Heart right ventricle (tissue), 16 donors: ENCODE measurements at regions of chr20 and their contacts with region 1.

Region 1: DNA sequence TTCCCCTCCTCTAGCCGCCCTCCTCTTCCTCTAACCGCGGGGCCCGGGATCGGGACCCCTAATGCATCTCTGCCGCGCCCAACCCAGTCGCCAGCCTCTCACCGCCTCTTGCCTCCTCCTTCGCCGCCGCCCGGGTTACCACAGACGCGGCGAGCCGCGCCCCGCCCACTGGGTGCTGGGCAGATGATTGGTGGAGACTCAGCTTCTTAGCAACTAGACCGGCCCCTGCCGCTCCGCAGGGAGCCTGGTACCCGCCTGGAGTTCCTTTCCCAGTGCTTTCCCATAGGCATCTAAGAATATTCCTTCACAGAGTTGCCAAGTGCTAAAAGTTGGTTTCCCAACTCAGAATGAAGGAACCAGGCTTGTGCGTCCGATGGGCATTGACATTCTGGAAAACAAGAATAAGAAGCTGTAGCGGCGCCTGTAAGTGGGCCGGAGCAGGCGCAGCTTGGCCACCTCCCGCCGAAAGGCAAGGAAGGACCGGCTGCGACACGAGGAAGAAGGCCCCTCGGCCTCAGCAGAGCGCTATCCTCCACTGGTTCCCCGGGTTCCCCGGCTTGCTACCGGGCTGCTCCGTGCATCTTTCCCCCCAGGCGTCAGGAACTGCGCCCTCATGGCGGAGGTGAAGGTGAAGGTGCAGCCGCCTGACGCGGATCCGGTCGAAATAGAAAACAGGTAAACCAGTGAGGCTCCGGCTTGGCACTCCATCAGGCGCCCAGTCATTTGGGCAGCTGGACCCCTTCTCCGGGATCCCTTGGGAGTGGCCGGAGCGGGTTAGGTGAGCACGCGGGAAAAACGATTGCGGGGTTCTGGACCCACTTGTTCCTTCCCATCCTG is at the starts of genes DZANK1 and POLR3F:
- DNase-seq: peak; percentile 95
- ATAC-seq: peak; percentile 100
- H3K4me3 ChIP-seq: peak within 1 kb of the TSS; percentile 64 to 100 (median 84)
- H3K27ac ChIP-seq: peak within 1 kb of the TSS; percentile 34 to 95 (median 86)
- H3K4me1 ChIP-seq: peaks cover 0 to 26% (median 20%) of the 10 kb centered on the region in 9 donors
- H3K27me3 ChIP-seq: no peaks in the 10 kb centered on the region
- CTCF ChIP-seq: no peak
- total RNA-seq, gene DZANK1: 0.35 to 1.7 (median 0.83) TPM
- total RNA-seq, gene POLR3F: 6.5 to 10.1 (median 7.8) TPM

Region 2: GRCh38 chr20:18287915-18288748 is 179.0 kb before region 1 on chr20 and contains the start of gene ZNF133:
- intact Hi-C with region 1: loop called in 1 of 10 experiments (anchors 5 kb)
- DNase-seq: peak; percentile 96 to 98
- ATAC-seq: peak; percentile 98 to 100 (median 99)
- H3K4me3 ChIP-seq: peak within 1 kb of the TSS; percentile 65 to 95 (median 83)
- H3K27ac ChIP-seq: peak within 1 kb of the TSS; percentile 91 to 100 (median 96)
- H3K4me1 ChIP-seq: peaks cover 0 to 19% (median 14%) of the 10 kb centered on the region in 9 donors
- H3K27me3 ChIP-seq: peaks cover 0 to 30% (median 16%) of the 10 kb centered on the region in 7 donors
- CTCF ChIP-seq: peak in 2 of 9 donors; percentile 12 to 22
- total RNA-seq, gene ZNF133: 4.9 to 7.2 (median 5.6) TPM

Region 3: DNA sequence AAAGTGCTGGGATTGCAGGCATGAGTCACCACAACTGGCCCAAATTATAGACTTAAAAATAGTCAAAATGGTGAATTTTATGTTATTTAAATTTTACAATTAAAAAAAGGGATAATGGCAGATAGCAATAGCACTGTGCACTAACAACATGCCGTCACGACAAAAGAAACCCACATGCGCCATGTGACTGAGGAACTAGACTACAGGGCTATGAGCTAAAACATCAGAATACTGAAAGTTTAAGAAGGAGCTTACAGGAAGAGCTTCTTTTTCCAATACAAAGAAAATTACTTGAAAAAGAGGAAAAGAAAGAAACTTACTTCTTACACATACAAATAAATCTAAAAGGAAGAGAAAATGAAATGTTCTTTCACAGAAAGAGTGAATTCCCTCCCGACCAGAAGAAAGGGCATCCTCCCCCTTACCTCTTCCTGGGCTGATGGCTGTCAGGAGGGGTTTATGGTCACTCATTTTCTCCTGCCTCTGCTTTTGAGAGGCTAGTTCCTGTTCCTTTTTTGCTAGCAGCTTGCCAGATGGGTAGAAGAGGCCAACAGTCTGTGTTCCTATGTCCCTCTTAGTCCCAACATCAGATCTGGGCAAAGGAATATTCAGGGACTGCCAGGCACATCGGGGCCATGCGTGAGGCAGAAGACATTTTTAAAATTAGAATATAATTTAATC is 54.8 kb before region 1 on chr20:
- intact Hi-C with region 1: loop called in 2 of 10 experiments (anchors 10 kb)
- DNase-seq: no peak
- ATAC-seq: peak in 1 of 8 donors; percentile 20
- H3K4me3 ChIP-seq: no peak overlapping the region
- H3K27ac ChIP-seq: peak overlapping the region in 1 of 10 donors; percentile 11
- H3K4me1 ChIP-seq: peaks cover 0 to 4% (median 0%) of the 10 kb centered on the region in 9 donors
- H3K27me3 ChIP-seq: no peaks in the 10 kb centered on the region
- CTCF ChIP-seq: no peak

Region 4: GRCh38 chr20:18496740-18497592 is 29.9 kb after region 1 on chr20 and contains the start of gene RBBP9:
- intact Hi-C with region 1: loop called in 1 of 10 experiments (anchors 2 kb)
- DNase-seq: peak; percentile 87 to 90
- ATAC-seq: peak; percentile 99 to 100 (median 100)
- H3K4me3 ChIP-seq: peak within 1 kb of the TSS; percentile 55 to 87 (median 76)
- H3K27ac ChIP-seq: peak within 1 kb of the TSS in 8 of 10 donors; percentile 51 to 75 (median 64)
- H3K4me1 ChIP-seq: peaks cover 2 to 19% (median 15%) of the 10 kb centered on the region in 9 donors
- H3K27me3 ChIP-seq: no peaks in the 10 kb centered on the region
- CTCF ChIP-seq: peak in 1 of 9 donors; percentile 8
- total RNA-seq, gene RBBP9: 4.7 to 10.3 (median 6.8) TPM

Region 5: DNA sequence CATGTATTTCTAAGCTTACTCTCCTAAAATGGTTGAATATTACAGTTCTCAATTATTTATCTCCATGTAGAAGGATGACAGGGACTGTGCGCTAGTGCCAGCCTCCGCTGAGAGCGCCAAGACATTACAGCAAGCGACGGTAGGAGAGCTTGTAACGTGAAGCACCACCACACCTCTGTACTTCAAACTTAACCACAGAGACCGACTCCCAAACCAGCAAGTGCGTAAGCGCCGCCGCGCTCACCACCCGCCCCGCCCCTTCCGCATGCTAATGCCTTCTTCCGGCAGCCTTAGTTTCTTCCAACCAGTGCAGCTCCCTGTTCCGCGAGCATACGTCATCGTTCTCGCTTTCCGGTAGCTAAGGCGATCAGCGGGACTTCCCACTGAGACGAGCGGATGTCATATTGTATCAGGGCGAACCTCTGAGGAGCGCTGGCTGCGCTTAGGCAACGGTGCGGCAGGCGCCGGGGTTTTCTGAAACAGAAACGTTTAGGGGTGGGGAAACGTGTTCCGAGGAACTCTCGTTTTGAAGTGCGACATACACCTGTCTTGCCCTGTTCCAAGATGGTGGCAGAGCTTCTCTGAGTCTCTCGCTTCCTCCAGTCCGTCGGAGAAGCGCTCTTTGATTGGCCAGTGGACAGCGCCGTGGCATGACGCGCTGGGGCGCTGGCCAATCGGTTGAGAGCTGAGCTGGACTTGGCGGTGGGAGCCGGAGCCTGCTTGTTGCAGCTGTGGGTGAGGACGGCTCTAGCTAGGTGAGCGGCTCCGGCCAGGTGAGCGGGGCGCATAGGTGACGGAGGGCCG is 40.3 kb after region 1 on chr20 and contains the start of gene SEC23B:
- intact Hi-C with region 1: loop called in 4 of 10 experiments (anchors 2 to 5 kb)
- DNase-seq: peak; percentile 95 to 97
- ATAC-seq: peak; percentile 98 to 99 (median 99)
- H3K4me3 ChIP-seq: peak within 1 kb of the TSS; percentile 50 to 95 (median 79)
- H3K27ac ChIP-seq: peak within 1 kb of the TSS; percentile 80 to 100 (median 93)
- H3K4me1 ChIP-seq: peaks cover 0 to 47% (median 14%) of the 10 kb centered on the region in 9 donors
- H3K27me3 ChIP-seq: peaks cover 0 to 14% (median 10%) of the 10 kb centered on the region in 7 donors
- CTCF ChIP-seq: no peak
- total RNA-seq, gene SEC23B: 7.5 to 20.5 (median 10.9) TPM

Region 6: DNA sequence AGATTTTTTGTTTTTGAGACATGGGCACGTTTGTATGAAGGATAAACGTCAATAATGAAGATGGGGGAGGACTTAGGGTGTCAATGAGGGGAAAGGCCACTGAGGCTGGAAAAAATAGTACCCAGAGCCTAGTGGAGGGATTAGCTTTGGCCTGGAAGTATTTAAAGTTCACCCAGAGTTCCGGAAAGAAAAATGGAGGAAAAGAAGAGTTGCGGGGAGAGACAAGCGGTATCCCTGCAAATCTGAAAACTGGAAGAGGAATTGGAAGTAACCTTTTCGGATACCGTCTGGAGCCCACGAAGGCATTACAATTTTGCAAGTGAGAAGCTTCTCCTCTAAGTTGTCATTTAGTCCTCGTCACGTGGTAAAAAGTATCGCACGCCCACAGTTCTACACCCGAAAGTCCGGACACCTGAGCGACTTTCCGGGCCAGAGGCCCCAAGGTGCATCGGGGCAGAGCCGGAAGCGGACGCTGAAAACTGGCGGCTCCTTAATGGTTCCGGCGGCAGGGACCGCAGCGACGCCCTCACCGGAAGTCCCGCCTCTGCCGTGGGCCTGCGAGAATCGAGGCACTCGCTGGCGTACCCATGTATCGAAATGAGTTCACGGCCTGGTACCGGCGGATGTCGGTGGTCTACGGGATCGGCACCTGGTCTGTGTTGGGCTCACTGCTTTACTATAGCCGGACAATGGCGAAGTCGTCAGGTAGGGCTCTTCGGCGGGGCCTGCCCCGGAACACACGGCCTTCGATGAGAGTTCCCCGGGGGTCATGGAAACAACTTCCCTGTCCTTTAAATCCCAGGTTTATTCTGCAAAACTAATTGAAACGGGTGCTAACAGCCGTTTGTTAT is 100.0 kb after region 1 on chr20 and contains the start of gene SMIM26:
- intact Hi-C with region 1: loop called in 2 of 10 experiments (anchors 1 to 10 kb)
- DNase-seq: peak; percentile 93 to 94
- ATAC-seq: peak; percentile 99 to 100 (median 100)
- H3K4me3 ChIP-seq: peak within 1 kb of the TSS; percentile 44 to 86 (median 77)
- H3K27ac ChIP-seq: peak within 1 kb of the TSS; percentile 42 to 94 (median 84)
- H3K4me1 ChIP-seq: peaks cover 0 to 20% (median 12%) of the 10 kb centered on the region in 9 donors
- H3K27me3 ChIP-seq: no peaks in the 10 kb centered on the region
- CTCF ChIP-seq: no peak
- total RNA-seq, gene SMIM26: 80.7 to 119 (median 105) TPM